Heart right ventricle (tissue), 16 donors: ENCODE measurements at regions of chr19 and their contacts with region 1.

Region 1: GRCh38 chr19:29610563-29611271 is 4.6 kb downstream of the POP4 start:
- DNase-seq: peak; percentile 75 to 81
- ATAC-seq: peak; percentile 65 to 83 (median 74)
- H3K4me3 ChIP-seq: no peak overlapping the region
- H3K27ac ChIP-seq: no peak overlapping the region
- H3K4me1 ChIP-seq: peaks cover 0 to 15% (median 8%) of the 10 kb centered on the region in 9 donors
- H3K27me3 ChIP-seq: no peaks in the 10 kb centered on the region
- CTCF ChIP-seq: peak; percentile 70 to 92 (median 89)

Region 2: GRCh38 chr19:29201855-29202254 is 408.9 kb before region 1 on chr19:
- intact Hi-C with region 1: loop called in 1 of 10 experiments (anchors 10 kb)
- DNase-seq: no peak
- ATAC-seq: no peak
- H3K4me3 ChIP-seq: no peak overlapping the region
- H3K27ac ChIP-seq: no peak overlapping the region
- H3K4me1 ChIP-seq: peaks cover 0 to 24% (median 7%) of the 10 kb centered on the region in 9 donors
- H3K27me3 ChIP-seq: no peaks in the 10 kb centered on the region
- CTCF ChIP-seq: no peak

Region 3: DNA sequence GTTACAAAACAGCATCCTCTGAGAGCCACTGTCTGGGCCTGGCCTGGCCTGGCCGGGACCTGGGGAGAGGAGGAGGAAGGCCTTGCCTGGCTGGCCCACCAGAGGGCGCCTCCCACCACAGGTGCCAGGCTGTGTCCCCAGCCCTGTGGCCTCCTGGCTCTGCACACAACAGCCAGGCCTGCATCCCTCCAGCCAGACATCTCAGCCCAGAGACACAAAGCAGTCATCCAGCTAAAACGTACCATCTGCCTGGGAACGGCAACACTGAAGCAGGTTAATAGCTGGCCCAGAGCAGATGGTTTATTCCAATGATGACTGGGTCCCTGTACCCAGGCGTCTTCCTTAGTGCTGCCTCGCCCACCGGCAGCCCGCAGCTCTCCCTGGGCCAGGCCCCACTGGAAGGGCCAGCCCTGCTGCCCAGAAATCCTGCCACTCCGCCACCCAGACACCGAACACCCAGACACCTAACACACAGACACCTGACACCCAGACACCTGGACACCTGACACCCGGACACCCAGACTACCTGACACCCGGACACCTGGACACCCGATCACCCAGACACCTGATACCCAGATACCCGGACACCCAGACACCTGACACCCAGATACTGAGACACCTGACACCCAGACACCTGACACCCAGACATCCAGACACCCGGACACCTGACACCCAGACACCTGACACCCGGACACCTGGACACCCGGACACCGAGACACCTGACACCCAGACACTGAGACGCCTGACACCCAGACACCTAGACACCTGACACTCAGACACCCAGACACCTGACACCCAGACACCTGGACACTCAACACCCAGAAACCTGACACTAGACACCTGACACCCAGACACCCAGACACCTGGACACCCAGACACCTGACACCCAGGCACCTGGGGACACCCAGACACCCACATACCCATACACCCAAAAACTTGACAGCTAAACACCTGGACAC is 84.2 kb after region 1 on chr19:
- intact Hi-C with region 1: loop called in 5 of 10 experiments (anchors 1 to 10 kb)
- DNase-seq: peak; percentile 73 to 85
- ATAC-seq: peak; percentile 93 to 98 (median 97)
- H3K4me3 ChIP-seq: no peak overlapping the region
- H3K27ac ChIP-seq: peak overlapping the region in 1 of 10 donors; percentile 17
- H3K4me1 ChIP-seq: peaks cover 0 to 8% (median 4%) of the 10 kb centered on the region in 9 donors
- H3K27me3 ChIP-seq: no peaks in the 10 kb centered on the region
- CTCF ChIP-seq: peak; percentile 76 to 96 (median 91)

Region 4: GRCh38 chr19:29714953-29715700 is 104.4 kb after region 1 on chr19 and contains the start of gene C19orf12:
- intact Hi-C with region 1: loop called (anchors 1 to 5 kb)
- DNase-seq: peak; percentile 53 to 73
- ATAC-seq: peak; percentile 76 to 92 (median 84)
- H3K4me3 ChIP-seq: peak within 1 kb of the TSS; percentile 82 to 99 (median 94)
- H3K27ac ChIP-seq: peak within 1 kb of the TSS; percentile 92 to 100 (median 98)
- H3K4me1 ChIP-seq: peaks cover 0 to 49% (median 23%) of the 10 kb centered on the region in 9 donors
- H3K27me3 ChIP-seq: no peaks in the 10 kb centered on the region
- CTCF ChIP-seq: peak in 1 of 9 donors; percentile 4
- total RNA-seq, gene C19orf12: 30.3 to 83.3 (median 40.0) TPM